Caco-2 (cell line): ENCODE measurements at regions of chr17 and their contacts with region 1.

Region 1: DNA sequence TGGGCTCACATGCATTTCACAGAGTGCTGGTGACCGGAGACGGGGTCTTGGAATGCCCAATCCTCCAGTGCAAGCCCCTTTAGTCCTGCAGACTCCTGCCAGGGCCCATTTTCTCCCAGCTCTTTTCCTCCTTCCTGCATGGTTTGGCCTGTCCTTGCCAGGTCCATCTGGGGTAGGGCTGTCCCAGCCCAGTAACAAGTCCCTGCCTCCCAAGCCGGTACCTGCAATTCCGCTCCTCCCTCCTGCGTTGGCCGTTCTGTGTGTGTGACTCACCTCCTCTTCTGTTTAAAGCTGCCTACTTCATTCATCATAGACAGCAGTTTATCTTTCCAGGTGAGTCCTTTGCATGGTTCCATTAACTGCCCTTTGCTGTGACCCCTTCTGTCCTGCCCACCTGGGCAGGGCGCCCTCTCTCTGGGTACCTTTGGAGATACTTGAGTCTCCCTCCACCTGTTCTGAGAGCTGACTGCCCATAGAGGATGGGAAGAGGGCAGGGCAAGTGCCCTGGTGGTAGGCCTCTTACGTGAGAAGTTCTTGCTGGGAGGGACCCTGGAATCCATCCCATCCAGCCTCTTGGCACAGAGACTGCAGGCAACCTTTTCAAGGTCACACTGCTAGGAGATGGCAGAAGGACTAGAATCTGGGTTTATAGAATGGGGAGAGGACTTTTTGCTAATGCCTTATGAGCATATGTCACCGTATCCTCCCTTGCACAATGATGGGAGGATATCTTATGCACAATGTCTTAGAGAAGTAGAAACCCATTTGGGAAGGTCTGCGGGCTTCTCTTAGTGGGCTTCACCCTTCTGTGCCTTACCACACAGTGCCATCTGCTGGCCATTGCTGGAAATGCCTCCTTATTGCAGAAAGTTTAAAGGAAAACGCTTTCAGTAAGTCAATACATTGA is 29.7 kb upstream of the LGALS9 start:
- DNase-seq: peak; percentile 90 to 94
- H3K4me3 ChIP-seq: no peak overlapping the region
- H3K4me3 Mint-ChIP-seq: no peak overlapping the region
- H3K27ac Mint-ChIP-seq: peak overlapping the region; percentile 11
- H3K4me1 ChIP-seq: no peaks in the 10 kb centered on the region
- H3K4me1 Mint-ChIP-seq: peaks cover 6% of the 10 kb centered on the region
- H3K27me3 ChIP-seq: no peaks in the 10 kb centered on the region
- H3K27me3 Mint-ChIP-seq: no peaks in the 10 kb centered on the region
- CTCF ChIP-seq: peak; percentile 99 to 100

Region 2: GRCh38 chr17:27245230-27245696 is 356.1 kb before region 1 on chr17:
- CTCF ChIA-PET with region 1: interaction called, 6 read pairs
- POLR2A ChIA-PET with region 1: no interaction called
- intact Hi-C with region 1: loop called (anchors 2 kb)
- DNase-seq: peak; percentile 90
- H3K4me3 ChIP-seq: no peak overlapping the region
- H3K4me3 Mint-ChIP-seq: peak overlapping the region; percentile 46
- H3K27ac Mint-ChIP-seq: peak overlapping the region; percentile 5
- H3K4me1 ChIP-seq: peaks cover 42% of the 10 kb centered on the region
- H3K4me1 Mint-ChIP-seq: peaks cover 37% of the 10 kb centered on the region
- H3K27me3 ChIP-seq: no peaks in the 10 kb centered on the region
- H3K27me3 Mint-ChIP-seq: no peaks in the 10 kb centered on the region
- CTCF ChIP-seq: peak; percentile 75 to 89

Region 3: GRCh38 chr17:27381007-27381501 is 220.3 kb before region 1 on chr17:
- CTCF ChIA-PET with region 1: no interaction called
- POLR2A ChIA-PET with region 1: no interaction called
- intact Hi-C with region 1: loop called (anchors 10 kb)
- DNase-seq: peak; percentile 77 to 82
- H3K4me3 ChIP-seq: no peak overlapping the region
- H3K4me3 Mint-ChIP-seq: no peak overlapping the region
- H3K27ac Mint-ChIP-seq: no peak overlapping the region
- H3K4me1 ChIP-seq: 0 out of 2 replicates have a peak, but pooled peaks cover 3% of the 10 kb centered on the region
- H3K4me1 Mint-ChIP-seq: no peaks in the 10 kb centered on the region
- H3K27me3 ChIP-seq: no peaks in the 10 kb centered on the region
- H3K27me3 Mint-ChIP-seq: peaks cover 4% of the 10 kb centered on the region
- CTCF ChIP-seq: peak; percentile 93 to 94

Region 4: GRCh38 chr17:27466743-27467375 is 134.5 kb before region 1 on chr17:
- CTCF ChIA-PET with region 1: interaction called, 11 read pairs
- POLR2A ChIA-PET with region 1: no interaction called
- intact Hi-C with region 1: no loop called
- DNase-seq: no peak
- H3K4me3 ChIP-seq: no peak overlapping the region
- H3K4me3 Mint-ChIP-seq: no peak overlapping the region
- H3K27ac Mint-ChIP-seq: no peak overlapping the region
- H3K4me1 ChIP-seq: peaks cover 4% of the 10 kb centered on the region; the same call in 1 of the 2 replicates
- H3K4me1 Mint-ChIP-seq: peaks cover 10% of the 10 kb centered on the region
- H3K27me3 ChIP-seq: no peaks in the 10 kb centered on the region
- H3K27me3 Mint-ChIP-seq: no peaks in the 10 kb centered on the region
- CTCF ChIP-seq: no peak

Region 5: DNA sequence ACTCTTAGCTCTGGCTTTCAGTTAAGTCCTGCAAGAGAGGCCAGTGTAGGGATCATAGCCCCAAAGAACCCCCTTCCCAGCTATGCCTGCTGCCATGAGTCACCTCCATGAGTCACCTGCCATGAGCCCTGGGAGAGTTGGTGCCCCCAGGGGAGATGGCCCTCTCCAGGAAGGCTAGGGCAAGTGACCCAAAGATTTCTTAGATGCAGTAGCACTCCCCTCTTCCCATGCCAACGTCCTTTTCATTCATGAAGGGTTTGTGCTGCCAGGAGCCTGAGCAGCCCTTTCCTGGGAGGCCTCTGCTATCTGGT is 48.9 kb before region 1 on chr17:
- CTCF ChIA-PET with region 1: interaction called, 5 read pairs
- POLR2A ChIA-PET with region 1: no interaction called
- intact Hi-C with region 1: loop called (anchors 2 kb)
- DNase-seq: peak; percentile 69 to 83
- H3K4me3 ChIP-seq: no peak overlapping the region
- H3K4me3 Mint-ChIP-seq: peak overlapping the region; percentile 18
- H3K27ac Mint-ChIP-seq: peak overlapping the region; percentile 86
- H3K4me1 ChIP-seq: peaks cover 47% of the 10 kb centered on the region
- H3K4me1 Mint-ChIP-seq: peaks cover 39% of the 10 kb centered on the region
- H3K27me3 ChIP-seq: no peaks in the 10 kb centered on the region
- H3K27me3 Mint-ChIP-seq: no peaks in the 10 kb centered on the region
- CTCF ChIP-seq: no peak

Region 6: DNA sequence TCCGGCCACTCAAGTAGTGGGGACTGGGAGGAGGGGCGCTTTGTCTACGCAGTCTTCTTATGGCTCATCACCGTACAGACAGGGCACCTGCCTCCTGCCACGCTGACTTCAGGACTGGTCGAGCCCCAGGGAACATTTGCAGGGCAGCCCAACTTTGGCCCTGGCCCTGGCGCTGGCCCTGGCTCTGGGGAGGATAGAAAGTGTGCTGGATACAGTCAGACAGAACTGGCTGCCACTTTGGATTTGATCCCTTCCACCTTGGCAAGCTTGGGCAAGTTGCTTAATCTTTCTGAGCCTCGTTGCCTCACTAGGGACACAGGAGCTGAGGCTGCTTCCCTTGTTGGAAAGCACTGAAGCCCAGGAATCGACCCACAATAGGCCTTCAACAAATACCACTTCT is 43.3 kb after region 1 on chr17:
- CTCF ChIA-PET with region 1: interaction called, 30 read pairs
- POLR2A ChIA-PET with region 1: no interaction called
- intact Hi-C with region 1: loop called (anchors 2 kb)
- DNase-seq: no peak
- H3K4me3 ChIP-seq: no peak overlapping the region
- H3K4me3 Mint-ChIP-seq: no peak overlapping the region
- H3K27ac Mint-ChIP-seq: no peak overlapping the region
- H3K4me1 ChIP-seq: peaks cover 11% of the 10 kb centered on the region
- H3K4me1 Mint-ChIP-seq: peaks cover 18% of the 10 kb centered on the region
- H3K27me3 ChIP-seq: no peaks in the 10 kb centered on the region
- H3K27me3 Mint-ChIP-seq: no peaks in the 10 kb centered on the region
- CTCF ChIP-seq: no peak